Heart left ventricle (tissue), 16 donors: ENCODE measurements at regions of chr6 and their contacts with region 1.

Region 1: GRCh38 chr6:143745166-143746133 is 67.7 kb downstream of the PHACTR2 start:
- DNase-seq: peak in 1 of 5 donors; percentile 49
- ATAC-seq: peak; percentile 27 to 65 (median 60)
- H3K4me3 ChIP-seq: peak overlapping the region in 6 of 12 donors; percentile 1 to 15 (median 12)
- H3K27ac ChIP-seq: peak overlapping the region; percentile 26 to 81 (median 65)
- H3K4me1 ChIP-seq: peaks cover 7 to 78% (median 58%) of the 10 kb centered on the region in 12 donors
- H3K27me3 ChIP-seq: no peaks in the 10 kb centered on the region
- CTCF ChIP-seq: no peak
- POLR2A ChIP-seq: no peak

Region 2: DNA sequence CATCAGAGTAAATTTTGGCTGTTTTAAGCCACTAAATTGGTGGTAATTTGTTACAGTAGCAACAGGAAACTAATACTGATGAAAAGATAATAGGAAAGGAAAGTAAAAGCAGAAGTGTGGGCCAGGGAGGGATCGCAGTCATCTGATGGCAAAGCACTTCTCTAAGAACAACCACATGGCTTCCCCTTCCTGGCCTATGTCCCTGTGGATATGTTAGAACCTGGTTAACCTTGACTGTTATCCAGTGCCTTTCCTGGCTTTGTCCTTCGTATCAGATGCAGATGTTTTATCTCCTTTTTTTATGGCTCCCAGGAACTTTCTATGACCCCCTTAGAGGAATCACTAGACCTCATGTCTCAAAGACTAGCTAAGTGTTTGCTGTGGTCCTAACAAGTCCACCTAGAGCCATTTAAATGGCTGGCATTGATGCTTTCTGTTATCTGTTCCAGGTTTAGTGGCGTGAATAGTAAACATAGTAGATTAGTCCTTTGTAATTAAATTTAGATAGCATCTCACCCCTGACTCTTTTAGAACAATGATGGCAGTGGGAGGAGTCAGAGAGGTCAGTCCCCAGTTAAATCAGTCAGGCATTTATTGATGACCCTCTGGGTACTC is 146.9 kb before region 1 on chr6:
- intact Hi-C with region 1: loop called in 1 of 10 experiments (anchors 5 kb)
- DNase-seq: peak in 1 of 5 donors; percentile 32
- ATAC-seq: peak; percentile 41 to 85 (median 52)
- H3K4me3 ChIP-seq: no peak overlapping the region
- H3K27ac ChIP-seq: peak overlapping the region in 6 of 12 donors; percentile 6 to 46 (median 26)
- H3K4me1 ChIP-seq: peaks cover 0 to 45% (median 21%) of the 10 kb centered on the region in 12 donors
- H3K27me3 ChIP-seq: no peaks in the 10 kb centered on the region
- CTCF ChIP-seq: no peak
- POLR2A ChIP-seq: no peak

Region 3: GRCh38 chr6:143689848-143690247 is 55.6 kb before region 1 on chr6:
- intact Hi-C with region 1: loop called in 4 of 10 experiments (anchors 5 to 10 kb)
- DNase-seq: no peak
- ATAC-seq: no peak
- H3K4me3 ChIP-seq: no peak overlapping the region
- H3K27ac ChIP-seq: peak overlapping the region in 1 of 12 donors; percentile 3
- H3K4me1 ChIP-seq: peaks cover 0 to 71% (median 50%) of the 10 kb centered on the region in 12 donors
- H3K27me3 ChIP-seq: no peaks in the 10 kb centered on the region
- CTCF ChIP-seq: no peak
- POLR2A ChIP-seq: no peak

Region 4: GRCh38 chr6:143700684-143701348 is 44.6 kb before region 1 on chr6:
- intact Hi-C with region 1: loop called in 4 of 10 experiments (anchors 5 kb)
- DNase-seq: peak in 4 of 5 donors; percentile 50 to 55 (median 50)
- ATAC-seq: peak; percentile 73 to 84 (median 78)
- H3K4me3 ChIP-seq: peak overlapping the region in 4 of 12 donors; percentile 5 to 19 (median 10)
- H3K27ac ChIP-seq: peak overlapping the region; percentile 25 to 78 (median 70)
- H3K4me1 ChIP-seq: peaks cover 0 to 78% (median 54%) of the 10 kb centered on the region in 12 donors
- H3K27me3 ChIP-seq: no peaks in the 10 kb centered on the region
- CTCF ChIP-seq: no peak
- POLR2A ChIP-seq: no peak

Region 5: GRCh38 chr6:143775336-143775735 is 29.9 kb after region 1 on chr6:
- intact Hi-C with region 1: loop called in 1 of 10 experiments (anchors 5 kb)
- DNase-seq: no peak
- ATAC-seq: peak in 3 of 4 donors; percentile 20 to 55 (median 35)
- H3K4me3 ChIP-seq: no peak overlapping the region
- H3K27ac ChIP-seq: peak overlapping the region in 6 of 12 donors; percentile 2 to 67 (median 45)
- H3K4me1 ChIP-seq: peaks cover 0 to 51% (median 34%) of the 10 kb centered on the region in 12 donors
- H3K27me3 ChIP-seq: no peaks in the 10 kb centered on the region
- CTCF ChIP-seq: no peak
- POLR2A ChIP-seq: no peak

Region 6: DNA sequence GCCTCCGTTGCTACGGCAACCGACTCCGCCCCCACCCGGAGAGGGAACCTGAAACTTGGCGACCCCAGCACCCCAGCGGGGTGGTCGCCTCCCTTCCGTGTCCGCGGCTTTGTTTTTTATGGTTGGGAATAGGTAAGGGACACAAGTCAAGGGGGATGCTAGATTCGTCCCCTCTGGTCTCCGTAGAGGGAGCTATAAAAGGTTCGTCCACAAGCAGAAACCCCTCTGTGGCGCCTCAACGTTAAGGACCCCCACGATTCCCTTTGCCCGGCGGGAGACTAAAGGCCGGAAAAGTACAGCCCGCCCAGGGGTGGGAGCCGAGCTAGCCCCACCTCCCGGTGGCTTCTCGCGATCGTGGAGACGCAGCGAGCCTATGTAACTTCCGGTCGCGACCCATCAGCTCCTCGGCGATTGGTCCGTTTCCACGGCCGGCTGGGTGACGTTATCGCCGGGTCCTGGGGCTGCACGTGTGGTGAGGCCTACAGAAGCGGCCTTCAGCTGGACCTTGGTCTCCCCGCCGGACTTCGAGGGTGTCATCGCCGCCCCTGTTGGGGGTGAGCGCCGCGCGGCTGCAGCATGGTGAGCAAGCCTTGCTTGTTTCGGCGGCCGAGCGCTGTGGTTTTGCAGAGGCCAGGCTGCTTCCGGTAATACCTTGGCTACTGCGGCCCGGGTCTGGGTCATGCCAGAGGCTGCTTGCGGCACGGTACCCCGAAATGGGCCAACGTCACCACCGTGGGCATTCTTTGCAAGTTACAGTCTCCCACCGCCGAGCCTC is 97.6 kb after region 1 on chr6 and contains the start of gene LTV1:
- intact Hi-C with region 1: loop called in 2 of 10 experiments (anchors 5 kb)
- DNase-seq: peak; percentile 97 to 98 (median 97)
- ATAC-seq: peak; percentile 100
- H3K4me3 ChIP-seq: peak within 1 kb of the TSS; percentile 55 to 94 (median 82)
- H3K27ac ChIP-seq: peak within 1 kb of the TSS; percentile 80 to 96 (median 93)
- H3K4me1 ChIP-seq: peaks cover 0 to 18% (median 11%) of the 10 kb centered on the region in 12 donors
- H3K27me3 ChIP-seq: no peaks in the 10 kb centered on the region
- CTCF ChIP-seq: peak in 4 of 12 donors; percentile 3 to 27 (median 20)
- POLR2A ChIP-seq: peak in 1 of 2 donors; percentile 83
- total RNA-seq, gene LTV1: 9.8 to 16.5 (median 12.9) TPM

Region 7: GRCh38 chr6:143928853-143929252 is 183.4 kb after region 1 on chr6:
- intact Hi-C with region 1: no loop called
- DNase-seq: no peak
- ATAC-seq: no peak
- H3K4me3 ChIP-seq: no peak overlapping the region
- H3K27ac ChIP-seq: no peak overlapping the region
- H3K4me1 ChIP-seq: no peaks in the 10 kb centered on the region
- H3K27me3 ChIP-seq: no peaks in the 10 kb centered on the region
- CTCF ChIP-seq: no peak
- POLR2A ChIP-seq: no peak